Breast epithelium (tissue), 4 donors: ENCODE measurements at regions of chr12 and their contacts with region 1.

Region 1: DNA sequence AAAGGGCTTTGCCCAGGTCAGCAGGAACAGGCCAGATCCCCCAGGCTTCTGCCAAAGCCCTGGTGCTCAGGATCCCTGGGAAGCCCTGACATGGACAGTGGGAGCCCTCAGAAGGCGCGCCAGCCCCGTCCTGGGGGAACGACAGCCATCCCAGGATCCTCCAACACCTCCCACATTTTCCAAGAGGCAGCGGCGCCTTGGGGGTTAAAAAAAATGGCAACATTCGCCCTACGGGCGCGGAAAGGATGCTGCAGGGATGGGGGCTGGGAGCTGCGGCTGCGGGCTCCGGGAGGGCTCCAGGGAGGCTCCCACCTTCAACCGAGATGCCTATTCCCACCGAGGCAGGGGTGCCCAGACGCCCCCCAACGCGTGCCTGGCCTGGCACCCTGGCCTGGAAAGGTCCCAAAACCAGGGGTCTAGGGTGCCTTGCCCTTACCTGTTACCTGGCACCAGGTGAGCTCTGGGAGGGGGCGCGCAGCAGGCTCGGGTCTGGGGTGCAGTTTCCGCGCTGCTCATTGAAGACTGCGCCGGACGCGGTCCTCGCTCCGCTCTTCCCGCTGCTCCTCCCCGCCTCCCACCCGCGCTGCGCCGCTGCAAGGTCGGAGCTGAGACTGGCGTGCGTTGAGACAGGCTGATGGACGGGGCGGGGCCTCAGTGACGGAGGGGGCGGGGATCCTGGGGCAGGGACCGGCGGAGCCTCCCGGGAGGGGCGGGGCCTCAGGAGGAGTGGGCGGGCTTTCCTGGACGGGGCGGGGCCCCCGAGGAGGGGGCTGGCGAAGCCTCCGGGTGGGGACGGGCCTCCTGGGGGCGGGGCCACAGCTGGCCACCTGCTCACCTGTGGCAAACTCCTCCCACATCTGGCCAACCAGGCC is at the start of gene ABCB9:
- DNase-seq: peak; percentile 92 to 96
- H3K4me3 ChIP-seq: peak within 1 kb of the TSS; percentile 46 to 75 (median 64)
- H3K27ac ChIP-seq: peak within 1 kb of the TSS; percentile 69 to 74
- H3K4me1 ChIP-seq: peaks cover 5 to 21% of the 10 kb centered on the region in 2 donors
- H3K27me3 ChIP-seq: no peaks in the 10 kb centered on the region
- CTCF ChIP-seq: no peak
- POLR2A ChIP-seq: no peak
- total RNA-seq, gene ABCB9: 0.96 to 8.6 (median 6.2) TPM

Region 2: DNA sequence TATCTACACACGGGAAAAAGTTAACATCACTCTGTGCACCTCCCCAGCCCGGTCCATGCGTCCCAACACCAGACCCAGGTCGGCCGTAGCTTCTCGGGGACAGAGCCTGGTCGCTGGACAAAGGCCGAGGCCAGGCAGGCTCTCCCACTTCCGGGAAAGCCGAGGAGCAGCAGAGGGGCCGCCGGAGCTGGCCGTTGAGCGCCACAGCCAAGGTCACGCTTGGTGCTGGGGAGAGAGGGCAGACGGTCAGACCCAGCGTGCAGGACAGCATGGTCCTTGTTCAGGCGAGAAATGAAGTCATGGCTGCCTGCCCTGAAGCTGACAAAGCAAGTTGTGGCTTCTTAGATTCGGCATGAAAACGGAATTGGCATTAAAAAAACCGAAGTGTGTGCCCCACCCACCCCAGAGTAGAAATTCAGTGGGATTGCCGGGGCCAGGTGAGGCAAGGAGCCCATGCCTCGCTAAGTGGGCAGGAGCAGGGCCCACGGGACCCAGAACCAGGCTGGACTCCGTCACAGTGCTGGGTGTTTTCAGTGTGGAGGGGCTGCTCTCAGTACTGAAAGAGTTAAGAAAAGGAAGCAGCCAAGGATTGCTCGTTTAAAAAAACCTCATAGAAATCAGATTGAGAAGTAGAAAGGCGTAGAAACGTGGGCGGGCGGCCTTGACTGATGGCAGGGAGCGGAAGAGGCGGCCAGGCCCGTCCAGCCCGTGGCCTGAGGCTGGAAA is 18.7 kb after region 1 on chr12:
- intact Hi-C with region 1: loop called (anchors 1 kb)
- DNase-seq: no peak
- H3K4me3 ChIP-seq: peak overlapping the region; percentile 6 to 52 (median 13)
- H3K27ac ChIP-seq: peak overlapping the region; percentile 35 to 70
- H3K4me1 ChIP-seq: peaks cover 14 to 16% of the 10 kb centered on the region in 2 donors
- H3K27me3 ChIP-seq: no peaks in the 10 kb centered on the region
- CTCF ChIP-seq: no peak
- POLR2A ChIP-seq: no peak

Region 3: DNA sequence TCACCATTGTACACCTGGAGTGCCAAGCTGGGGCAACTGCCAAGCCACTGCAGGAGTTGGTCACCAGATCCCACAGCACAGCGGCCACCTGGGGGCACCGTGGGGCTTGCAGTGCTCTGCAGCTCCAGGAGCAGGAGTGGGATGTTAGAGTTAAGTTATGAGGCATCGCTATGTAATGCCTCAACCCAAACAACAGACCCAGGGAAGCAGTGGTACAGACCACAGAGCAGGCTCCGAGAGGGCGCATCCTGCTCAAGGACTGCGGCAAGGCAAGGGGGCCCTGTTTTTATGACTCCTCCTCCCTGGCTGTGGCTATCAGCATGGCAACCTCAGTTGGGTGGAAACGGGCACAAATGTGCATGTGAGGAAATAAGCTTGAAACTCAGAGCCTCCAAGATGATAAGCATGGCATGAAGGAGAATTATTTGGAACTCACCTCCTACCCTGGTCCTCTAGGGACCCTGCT is 77.5 kb after region 1 on chr12:
- intact Hi-C with region 1: loop called (anchors 10 kb)
- DNase-seq: peak; percentile 80 to 81
- H3K4me3 ChIP-seq: no peak overlapping the region
- H3K27ac ChIP-seq: no peak overlapping the region
- H3K4me1 ChIP-seq: no peaks in the 10 kb centered on the region
- H3K27me3 ChIP-seq: no peaks in the 10 kb centered on the region
- CTCF ChIP-seq: peak in 2 of 3 donors; percentile 83 to 86
- POLR2A ChIP-seq: no peak